Heart left ventricle (tissue), 16 donors: ENCODE measurements at regions of chr17 and their contacts with region 1.

Region 1: DNA sequence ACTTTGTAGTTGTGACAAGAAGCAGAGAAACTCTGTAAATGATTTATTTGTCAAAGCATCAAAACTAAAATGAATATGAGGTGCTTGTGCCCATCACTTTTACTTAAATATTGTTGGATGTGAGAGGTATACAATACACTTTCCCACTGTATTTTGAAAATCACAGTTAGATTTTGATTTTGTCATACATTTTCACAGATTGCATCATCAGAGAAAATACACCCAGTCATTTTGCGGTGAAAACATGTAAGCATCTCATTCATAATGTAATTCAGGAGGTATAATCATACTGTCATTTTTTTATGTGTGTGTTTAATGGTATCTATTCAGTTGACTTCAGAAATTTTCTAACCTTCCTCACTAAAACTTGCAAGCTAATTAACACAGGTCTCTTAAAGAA is 11.3 kb downstream of the ZNF207 start:
- DNase-seq: no peak
- ATAC-seq: no peak
- H3K4me3 ChIP-seq: no peak overlapping the region
- H3K27ac ChIP-seq: no peak overlapping the region
- H3K4me1 ChIP-seq: peaks cover 0 to 20% (median 12%) of the 10 kb centered on the region in 12 donors
- H3K27me3 ChIP-seq: no peaks in the 10 kb centered on the region
- CTCF ChIP-seq: no peak
- POLR2A ChIP-seq: no peak

Region 2: DNA sequence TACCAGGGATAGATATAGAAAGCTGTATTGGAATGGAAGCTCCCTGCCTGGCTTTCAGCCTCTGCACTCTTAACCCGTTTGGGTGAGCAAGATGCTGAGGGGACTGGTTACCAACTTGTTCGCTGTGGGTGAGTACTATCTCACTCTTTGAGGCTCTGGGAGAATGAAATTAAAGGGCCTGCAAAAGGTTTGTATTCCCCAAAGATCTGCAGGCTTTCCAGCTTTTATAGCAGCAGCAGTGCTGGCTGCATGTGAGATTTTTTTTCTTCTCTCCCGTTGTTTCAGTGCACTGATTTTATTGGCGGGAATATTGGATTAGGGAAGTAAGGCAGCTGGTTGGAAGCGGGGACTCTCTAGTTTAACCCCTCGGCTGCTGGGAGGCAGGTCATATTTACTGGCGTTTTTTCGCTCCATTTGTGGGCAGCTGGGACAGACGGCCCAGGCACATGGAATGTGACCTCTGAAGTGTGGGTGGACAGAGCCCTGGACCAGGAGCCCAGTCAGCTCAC is 50.2 kb before region 1 on chr17:
- intact Hi-C with region 1: no loop called
- DNase-seq: no peak
- ATAC-seq: peak in 1 of 4 donors; percentile 37
- H3K4me3 ChIP-seq: peak overlapping the region in 6 of 12 donors; percentile 1 to 48 (median 28)
- H3K27ac ChIP-seq: no peak overlapping the region
- H3K4me1 ChIP-seq: peaks cover 0 to 8% (median 0%) of the 10 kb centered on the region in 12 donors
- H3K27me3 ChIP-seq: peaks cover 0 to 9% (median 0%) of the 10 kb centered on the region in 9 donors
- CTCF ChIP-seq: no peak
- POLR2A ChIP-seq: no peak

Region 3: DNA sequence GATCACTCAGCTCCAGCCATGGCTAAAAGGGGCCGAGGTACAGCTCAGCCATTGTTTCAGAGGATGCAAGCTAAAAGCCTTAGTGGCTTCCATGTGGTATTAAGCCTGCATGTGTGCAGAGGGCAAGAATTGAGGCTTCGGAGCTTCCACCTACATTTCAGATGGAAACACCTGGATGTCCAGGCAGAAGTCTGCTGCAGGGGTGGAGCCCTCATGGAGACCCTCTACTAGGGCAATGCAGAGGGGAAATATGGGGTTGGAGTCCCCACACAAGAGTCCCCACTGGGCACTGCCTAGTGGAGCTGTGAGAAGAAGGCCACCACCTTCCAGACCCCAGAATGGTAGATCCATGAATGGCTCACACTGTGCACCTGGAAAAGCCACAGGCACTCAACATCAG is 68.3 kb after region 1 on chr17:
- intact Hi-C with region 1: no loop called
- DNase-seq: no peak
- ATAC-seq: no peak
- H3K4me3 ChIP-seq: no peak overlapping the region
- H3K27ac ChIP-seq: no peak overlapping the region
- H3K4me1 ChIP-seq: no peaks in the 10 kb centered on the region
- H3K27me3 ChIP-seq: no peaks in the 10 kb centered on the region
- CTCF ChIP-seq: no peak
- POLR2A ChIP-seq: no peak

Region 4: GRCh38 chr17:32461853-32462617 is 100.8 kb after region 1 on chr17:
- intact Hi-C with region 1: loop called in 1 of 10 experiments (anchors 10 kb)
- DNase-seq: peak in 2 of 5 donors; percentile 32 to 35
- ATAC-seq: peak in 2 of 4 donors; percentile 50 to 64
- H3K4me3 ChIP-seq: no peak overlapping the region
- H3K27ac ChIP-seq: no peak overlapping the region
- H3K4me1 ChIP-seq: peaks cover 0 to 13% (median 0%) of the 10 kb centered on the region in 12 donors
- H3K27me3 ChIP-seq: no peaks in the 10 kb centered on the region
- CTCF ChIP-seq: peak; percentile 41 to 67 (median 54)
- POLR2A ChIP-seq: no peak